ENCODE measurements at regions of chr19 and their contacts with region 1.

Region 1: GRCh38 chr19:44954824-44955586 is at the start of gene CLPTM1:
- DNase-seq: peak; percentile 90
- ATAC-seq: peak; percentile 91
- H3K4me3 ChIP-seq: peak within 1 kb of the TSS; percentile 95
- H3K27ac ChIP-seq: peak within 1 kb of the TSS; percentile 92
- H3K4me1 ChIP-seq: peaks cover 11% of the 10 kb centered on the region; the same call in 1 of the 2 replicates
- H3K27me3 ChIP-seq: no peaks in the 10 kb centered on the region
- CTCF ChIP-seq: no peak
- total RNA-seq, gene CLPTM1: 44.9 and 61.3 TPM in 2 replicates

Region 2: DNA sequence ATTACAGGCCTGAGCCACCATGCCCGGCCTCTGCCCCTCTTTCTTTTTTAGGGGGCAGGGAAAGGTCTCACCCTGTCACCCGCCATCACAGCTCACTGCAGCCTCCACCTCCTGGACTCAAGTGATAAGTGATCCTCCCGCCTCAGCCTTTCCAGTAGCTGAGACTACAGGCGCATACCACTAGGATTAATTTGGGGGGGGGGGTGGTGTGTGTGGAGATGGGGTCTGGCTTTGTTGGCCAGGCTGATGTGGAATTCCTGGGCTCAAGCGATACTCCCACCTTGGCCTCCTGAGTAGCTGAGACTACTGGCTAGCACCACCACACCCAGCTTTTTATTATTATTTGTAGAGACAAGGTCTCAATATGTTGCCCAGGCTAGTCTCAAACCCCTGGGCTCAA is 45.2 kb before region 1 on chr19:
- CTCF ChIA-PET with region 1: no interaction called
- POLR2A ChIA-PET with region 1: no interaction called
- intact Hi-C with region 1: loop called (anchors 2 kb)
- DNase-seq: no peak
- ATAC-seq: no peak
- H3K4me3 ChIP-seq: no peak overlapping the region
- H3K27ac ChIP-seq: no peak overlapping the region
- H3K4me1 ChIP-seq: peaks cover 10% of the 10 kb centered on the region
- H3K27me3 ChIP-seq: no peaks in the 10 kb centered on the region
- CTCF ChIP-seq: no peak

Region 3: GRCh38 chr19:45130888-45131615 is 176.0 kb after region 1 on chr19:
- CTCF ChIA-PET with region 1: interaction called, 10 read pairs
- POLR2A ChIA-PET with region 1: no interaction called
- intact Hi-C with region 1: no loop called
- DNase-seq: peak; percentile 58
- ATAC-seq: peak; percentile 77
- H3K4me3 ChIP-seq: no peak overlapping the region
- H3K27ac ChIP-seq: no peak overlapping the region
- H3K4me1 ChIP-seq: no peaks in the 10 kb centered on the region; the same call in 1 of the 2 replicates
- H3K27me3 ChIP-seq: no peaks in the 10 kb centered on the region
- CTCF ChIP-seq: peak; percentile 56